Activated CD4-positive, alpha-beta memory T cell treated with anti-CD3 and anti-CD28 coated beads for 36 hours (primary cell): ENCODE measurements at regions of chr6 and their contacts with region 1.

Region 1: GRCh38 chr6:121334299-121335086 is at the start of gene TBC1D32:
- DNase-seq: peak; percentile 92
- H3K4me3 Mint-ChIP-seq: peak within 1 kb of the TSS; percentile 92
- H3K27ac Mint-ChIP-seq: peak within 1 kb of the TSS; percentile 95
- H3K4me1 Mint-ChIP-seq: peaks cover 19% of the 10 kb centered on the region
- H3K27me3 Mint-ChIP-seq: no peaks in the 10 kb centered on the region
- total RNA-seq, gene TBC1D32: 4.6 to 6.7 TPM

Region 2: DNA sequence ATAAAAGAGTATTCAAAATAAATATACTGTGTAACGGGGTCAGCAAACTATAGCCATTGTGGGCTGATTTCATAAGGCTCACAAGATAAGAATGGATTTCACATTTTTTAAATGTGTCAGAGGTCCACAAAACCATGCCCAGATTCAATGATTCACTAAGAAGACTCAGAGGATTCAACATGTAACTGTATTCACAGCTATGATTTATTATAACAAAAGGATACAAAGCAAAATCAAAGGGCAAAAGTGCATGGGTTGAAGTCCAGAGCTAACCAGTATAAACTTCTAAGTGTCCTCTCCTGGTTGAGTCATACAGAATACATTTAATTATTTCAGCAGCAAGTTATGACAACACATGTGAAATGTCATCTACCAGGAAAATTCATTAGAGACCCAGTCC is 49.5 kb before region 1 on chr6:
- CTCF ChIA-PET with region 1: no interaction called
- POLR2A ChIA-PET with region 1: no interaction called
- intact Hi-C with region 1: no loop called
- DNase-seq: no peak
- H3K4me3 Mint-ChIP-seq: no peak overlapping the region
- H3K27ac Mint-ChIP-seq: no peak overlapping the region
- H3K4me1 Mint-ChIP-seq: no peaks in the 10 kb centered on the region
- H3K27me3 Mint-ChIP-seq: no peaks in the 10 kb centered on the region

Region 3: GRCh38 chr6:121302882-121303281 is 31.6 kb before region 1 on chr6:
- CTCF ChIA-PET with region 1: no interaction called
- POLR2A ChIA-PET with region 1: no interaction called
- intact Hi-C with region 1: no loop called
- DNase-seq: no peak
- H3K4me3 Mint-ChIP-seq: no peak overlapping the region
- H3K27ac Mint-ChIP-seq: no peak overlapping the region
- H3K4me1 Mint-ChIP-seq: peaks cover 4% of the 10 kb centered on the region
- H3K27me3 Mint-ChIP-seq: no peaks in the 10 kb centered on the region

Region 4: DNA sequence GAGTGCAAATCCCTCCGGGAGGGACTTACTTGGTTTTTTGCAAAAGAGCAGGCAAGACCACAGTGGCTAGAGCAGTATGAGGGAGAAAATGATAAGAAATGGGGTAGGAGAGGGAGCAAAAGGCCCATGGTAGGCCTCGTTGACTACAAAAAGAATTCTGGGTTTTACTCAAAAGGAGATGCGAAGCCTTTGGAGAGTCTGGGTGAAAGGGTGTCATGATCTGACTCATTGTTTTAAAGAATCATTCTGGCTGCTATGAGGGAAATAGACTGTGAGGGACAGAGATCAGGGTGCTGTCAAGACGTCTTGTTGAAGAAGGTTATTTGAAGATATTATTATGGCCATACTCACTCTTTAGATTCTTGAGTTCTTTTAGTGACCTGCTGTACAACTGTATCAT is 13.2 kb before region 1 on chr6:
- CTCF ChIA-PET with region 1: interaction called, 4 read pairs
- POLR2A ChIA-PET with region 1: no interaction called
- intact Hi-C with region 1: loop called (anchors 1 kb)
- DNase-seq: peak; percentile 15
- H3K4me3 Mint-ChIP-seq: no peak overlapping the region
- H3K27ac Mint-ChIP-seq: no peak overlapping the region
- H3K4me1 Mint-ChIP-seq: peaks cover 7% of the 10 kb centered on the region
- H3K27me3 Mint-ChIP-seq: no peaks in the 10 kb centered on the region

Region 5: GRCh38 chr6:121365536-121366521 is 31.3 kb after region 1 on chr6:
- CTCF ChIA-PET with region 1: no interaction called
- POLR2A ChIA-PET with region 1: no interaction called
- intact Hi-C with region 1: no loop called
- DNase-seq: no peak
- H3K4me3 Mint-ChIP-seq: no peak overlapping the region
- H3K27ac Mint-ChIP-seq: no peak overlapping the region
- H3K4me1 Mint-ChIP-seq: no peaks in the 10 kb centered on the region
- H3K27me3 Mint-ChIP-seq: peaks cover 14% of the 10 kb centered on the region

Region 6: GRCh38 chr6:121800047-121800446 is 465.6 kb after region 1 on chr6:
- CTCF ChIA-PET with region 1: no interaction called
- POLR2A ChIA-PET with region 1: no interaction called
- intact Hi-C with region 1: no loop called
- DNase-seq: no peak
- H3K4me3 Mint-ChIP-seq: no peak overlapping the region
- H3K27ac Mint-ChIP-seq: no peak overlapping the region
- H3K4me1 Mint-ChIP-seq: no peaks in the 10 kb centered on the region
- H3K27me3 Mint-ChIP-seq: no peaks in the 10 kb centered on the region

Region 7: DNA sequence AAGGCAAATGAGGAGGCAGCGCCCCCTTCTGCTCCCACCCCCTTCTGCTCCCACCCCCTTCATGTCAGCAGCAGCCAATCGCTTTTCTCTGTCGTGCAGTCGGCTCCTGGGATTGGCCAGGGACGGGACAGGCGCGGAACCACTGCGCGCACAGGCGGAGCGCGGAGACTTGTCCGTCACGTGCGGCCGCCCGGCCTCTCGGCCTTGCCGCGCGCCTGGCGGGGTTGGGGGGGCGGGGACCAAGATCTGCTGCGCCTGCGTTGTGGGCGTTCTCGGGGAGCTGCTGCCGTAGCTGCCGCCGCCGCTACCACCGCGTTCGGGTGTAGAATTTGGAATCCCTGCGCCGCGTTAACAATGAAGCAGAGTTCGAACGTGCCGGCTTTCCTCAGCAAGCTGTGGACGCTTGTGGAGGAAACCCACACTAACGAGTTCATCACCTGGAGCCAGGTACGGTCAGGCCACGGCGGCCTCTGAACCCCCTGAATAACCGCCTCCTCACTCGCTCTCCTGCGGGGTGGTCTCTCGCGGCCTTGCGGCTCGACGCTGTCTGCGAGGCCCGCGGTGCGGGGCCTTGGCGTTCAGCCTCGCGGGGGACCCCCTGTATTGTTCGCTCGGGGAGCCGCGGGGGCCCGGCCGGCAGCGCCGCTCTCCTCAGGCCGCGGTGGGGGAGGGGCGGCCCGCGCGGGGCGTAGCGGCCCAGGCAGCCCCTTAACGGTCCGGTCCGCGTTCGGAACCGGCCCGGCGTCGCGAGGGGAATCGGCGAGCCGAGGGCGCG is 1065.1 kb after region 1 on chr6 and contains the start of gene HSF2:
- CTCF ChIA-PET with region 1: no interaction called
- POLR2A ChIA-PET with region 1: no interaction called
- intact Hi-C with region 1: loop called (anchors 1 kb)
- DNase-seq: peak; percentile 97
- H3K4me3 Mint-ChIP-seq: peak within 1 kb of the TSS; percentile 95
- H3K27ac Mint-ChIP-seq: peak within 1 kb of the TSS; percentile 91
- H3K4me1 Mint-ChIP-seq: peaks cover 36% of the 10 kb centered on the region
- H3K27me3 Mint-ChIP-seq: no peaks in the 10 kb centered on the region
- total RNA-seq, gene HSF2: 16.0 to 18.5 TPM